Left colon (tissue), 2 donors: ENCODE measurements at regions of chr19 and their contacts with region 1.

Region 1: DNA sequence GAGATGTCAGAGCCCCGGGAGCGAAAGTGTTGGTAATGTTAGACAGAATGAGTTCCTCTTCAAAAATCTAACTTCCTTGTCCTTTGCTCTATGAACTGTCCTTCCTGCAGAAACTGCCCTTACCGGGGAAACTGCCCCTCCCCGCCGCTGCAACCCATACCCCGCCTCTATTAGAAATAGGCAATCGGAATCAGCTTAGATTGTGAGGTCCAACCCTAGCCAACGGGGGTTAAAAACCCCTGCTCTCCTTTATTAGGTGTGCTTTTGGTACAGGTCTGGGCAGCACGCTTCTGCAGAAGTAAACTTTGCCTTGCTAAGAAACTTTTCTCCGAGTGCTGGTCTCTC is 11.5 kb upstream of the CAPNS1 start:
- DNase-seq: peak; percentile 66 to 71
- ATAC-seq: peak; percentile 68

Region 2: GRCh38 chr19:36172852-36173251 is 44.5 kb after region 1 on chr19:
- intact Hi-C with region 1: loop called (anchors 5 kb)
- DNase-seq: no peak
- ATAC-seq: no peak

Region 3: DNA sequence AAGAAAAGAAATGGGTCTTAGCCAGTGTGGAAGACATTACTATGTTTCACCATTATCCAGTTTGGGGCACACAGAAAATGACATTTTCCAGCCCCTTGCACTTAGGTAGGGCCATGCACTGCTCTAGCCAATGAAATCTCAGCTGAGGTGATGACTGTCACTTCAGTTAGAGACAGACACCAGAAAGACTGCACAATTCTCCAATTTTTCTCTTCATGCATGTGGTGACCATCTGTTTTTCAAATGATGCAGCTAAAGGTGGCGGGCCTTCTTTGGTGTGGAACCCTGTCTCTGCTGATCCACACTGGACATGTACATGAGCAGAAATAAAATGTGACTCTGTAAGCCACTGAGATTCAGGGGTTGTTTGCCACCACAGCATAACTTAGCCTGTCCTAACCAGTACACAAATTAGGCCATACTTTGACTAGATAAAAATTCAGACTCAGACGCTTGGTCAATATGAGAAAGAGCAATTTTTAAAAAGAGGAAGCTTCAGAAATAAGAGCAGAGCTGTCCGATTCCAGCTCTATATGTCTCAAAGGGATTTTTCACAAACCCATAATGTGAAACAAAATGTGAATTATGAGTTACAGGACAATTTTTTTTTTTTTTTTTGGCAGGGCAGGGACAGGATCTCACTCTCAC is 79.4 kb after region 1 on chr19:
- intact Hi-C with region 1: no loop called
- DNase-seq: no peak
- ATAC-seq: no peak